Right lobe of liver (tissue), 6 donors: ENCODE measurements at regions of chr6 and their contacts with region 1.

Region 1: GRCh38 chr6:52020945-52021570 is 66.4 kb downstream of the PKHD1 start:
- DNase-seq: no peak
- ATAC-seq: peak; percentile 39 to 53 (median 43)
- H3K4me3 ChIP-seq: no peak overlapping the region
- H3K27ac ChIP-seq: peak overlapping the region in 1 of 3 donors; percentile 71
- H3K4me1 ChIP-seq: peaks cover 0 to 32% (median 4%) of the 10 kb centered on the region in 4 donors
- H3K27me3 ChIP-seq: no peaks in the 10 kb centered on the region
- CTCF ChIP-seq: peak; percentile 75 to 83 (median 78)
- POLR2A ChIP-seq: no peak

Region 2: GRCh38 chr6:51855310-51856082 is 165.6 kb before region 1 on chr6:
- intact Hi-C with region 1: loop called in 1 of 2 experiments (anchors 10 kb)
- DNase-seq: no peak
- ATAC-seq: peak; percentile 79 to 86 (median 80)
- H3K4me3 ChIP-seq: no peak overlapping the region
- H3K27ac ChIP-seq: no peak overlapping the region
- H3K4me1 ChIP-seq: peaks cover 0 to 8% (median 0%) of the 10 kb centered on the region in 4 donors
- H3K27me3 ChIP-seq: no peaks in the 10 kb centered on the region
- CTCF ChIP-seq: peak; percentile 63 to 76 (median 71)
- POLR2A ChIP-seq: no peak